Ascending aorta (tissue), 2 donors: ENCODE measurements at regions of chr11 and their contacts with region 1.

Region 1: GRCh38 chr11:106021967-106022794 is at the start of gene MSANTD4:
- DNase-seq: peak; percentile 99 to 100
- H3K4me3 ChIP-seq: peak within 1 kb of the TSS; percentile 68 to 96
- H3K27ac ChIP-seq: peak within 1 kb of the TSS; percentile 77 to 79
- H3K4me1 ChIP-seq: peaks cover 3 to 12% of the 10 kb centered on the region in 2 donors
- H3K27me3 ChIP-seq: no peaks in the 10 kb centered on the region
- CTCF ChIP-seq: peak in 1 of 3 experiments; percentile 20
- total RNA-seq, gene MSANTD4: 13.6 TPM

Region 2: GRCh38 chr11:105790840-105791239 is 231.3 kb before region 1 on chr11:
- intact Hi-C with region 1: no loop called
- DNase-seq: no peak
- H3K4me3 ChIP-seq: no peak overlapping the region
- H3K27ac ChIP-seq: no peak overlapping the region
- H3K4me1 ChIP-seq: no peaks in the 10 kb centered on the region
- H3K27me3 ChIP-seq: no peaks in the 10 kb centered on the region
- CTCF ChIP-seq: no peak

Region 3: DNA sequence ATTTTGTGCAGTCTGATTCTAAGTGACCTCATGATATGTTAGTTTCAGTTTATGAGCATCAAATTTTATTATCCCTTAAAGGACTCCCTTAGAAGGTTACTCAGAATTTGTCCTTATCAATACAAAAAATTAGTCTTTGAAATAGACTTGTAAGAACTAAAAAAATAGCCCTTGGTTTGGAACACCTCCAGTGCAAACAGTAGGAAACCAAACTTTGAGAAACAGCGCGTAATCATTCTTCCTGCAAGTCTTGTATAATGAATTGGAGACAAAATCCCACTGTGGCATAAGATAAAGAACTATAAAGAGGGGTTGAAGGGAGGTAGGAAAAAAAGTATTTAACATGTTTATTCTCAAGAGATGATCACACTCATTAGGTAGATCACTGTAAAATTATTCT is 10.7 kb after region 1 on chr11:
- intact Hi-C with region 1: no loop called
- DNase-seq: no peak
- H3K4me3 ChIP-seq: no peak overlapping the region
- H3K27ac ChIP-seq: no peak overlapping the region
- H3K4me1 ChIP-seq: no peaks in the 10 kb centered on the region
- H3K27me3 ChIP-seq: no peaks in the 10 kb centered on the region
- CTCF ChIP-seq: no peak

Region 4: DNA sequence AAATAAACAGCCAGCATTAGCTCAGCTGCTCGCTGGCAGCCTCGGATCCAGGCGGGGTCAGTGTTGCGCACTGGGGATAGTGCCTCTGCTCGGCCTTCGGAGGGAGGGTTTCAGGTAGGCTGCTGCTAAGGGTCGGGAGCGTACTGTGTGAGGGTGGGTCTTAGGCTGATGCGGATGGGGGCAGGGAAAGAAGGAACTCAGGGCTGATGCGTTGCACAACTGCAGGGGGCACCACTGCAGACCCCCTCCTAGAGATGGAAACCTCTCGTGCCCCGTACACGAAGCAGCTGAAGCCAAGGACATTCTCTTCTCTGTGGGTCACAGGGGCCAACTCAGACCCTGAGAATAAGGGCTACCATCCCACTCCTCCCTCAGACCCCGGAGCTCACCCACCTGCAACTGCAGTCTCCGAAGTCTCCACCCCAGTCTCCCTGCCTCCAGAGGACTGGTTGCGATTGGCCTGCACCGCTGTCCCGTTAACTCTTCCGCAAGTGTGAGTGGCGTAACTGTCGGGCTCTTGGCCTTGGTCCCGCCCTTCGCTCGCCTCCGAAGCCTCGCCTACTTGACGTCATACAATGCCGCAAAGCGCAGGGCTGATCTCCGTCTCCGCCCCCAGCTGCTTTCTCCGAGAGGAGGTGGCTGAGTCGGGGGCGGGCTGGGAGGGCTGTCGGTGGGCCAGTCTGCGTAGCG is 54.9 kb after region 1 on chr11 and contains the start of gene KBTBD3:
- intact Hi-C with region 1: loop called (anchors 1 kb)
- DNase-seq: peak; percentile 96 to 99
- H3K4me3 ChIP-seq: peak within 1 kb of the TSS; percentile 87 to 98
- H3K27ac ChIP-seq: peak within 1 kb of the TSS; percentile 97 to 99
- H3K4me1 ChIP-seq: peaks cover 0 to 17% of the 10 kb centered on the region in 2 donors
- H3K27me3 ChIP-seq: no peaks in the 10 kb centered on the region
- CTCF ChIP-seq: peak in 1 of 3 experiments; percentile 43
- total RNA-seq, gene KBTBD3: not detected